Activated T-helper 1 cell treated with anti-CD3 and anti-CD28 coated beads, Interleukin-12 subunit alpha, Interleukin-12 subunit beta, Interleukin-2, Interleukin-4 antibody, amounts not matched to agents 30 ng/mL and 10 ng/mL and 1 ng/mL, durations not matched to agents 14 hours and 24 hours and 36 hours (primary cell): ENCODE measurements at regions of chr9 and their contacts with region 1.

Region 1: GRCh38 chr9:99253772-99254431 is 31.8 kb downstream of the SEC61B start:
- DNase-seq: peak; percentile 82
- H3K4me3 Mint-ChIP-seq: peak overlapping the region; percentile 55
- H3K27ac Mint-ChIP-seq: peak overlapping the region; percentile 92
- H3K4me1 Mint-ChIP-seq: peaks cover 62% of the 10 kb centered on the region
- H3K27me3 Mint-ChIP-seq: no peaks in the 10 kb centered on the region

Region 2: DNA sequence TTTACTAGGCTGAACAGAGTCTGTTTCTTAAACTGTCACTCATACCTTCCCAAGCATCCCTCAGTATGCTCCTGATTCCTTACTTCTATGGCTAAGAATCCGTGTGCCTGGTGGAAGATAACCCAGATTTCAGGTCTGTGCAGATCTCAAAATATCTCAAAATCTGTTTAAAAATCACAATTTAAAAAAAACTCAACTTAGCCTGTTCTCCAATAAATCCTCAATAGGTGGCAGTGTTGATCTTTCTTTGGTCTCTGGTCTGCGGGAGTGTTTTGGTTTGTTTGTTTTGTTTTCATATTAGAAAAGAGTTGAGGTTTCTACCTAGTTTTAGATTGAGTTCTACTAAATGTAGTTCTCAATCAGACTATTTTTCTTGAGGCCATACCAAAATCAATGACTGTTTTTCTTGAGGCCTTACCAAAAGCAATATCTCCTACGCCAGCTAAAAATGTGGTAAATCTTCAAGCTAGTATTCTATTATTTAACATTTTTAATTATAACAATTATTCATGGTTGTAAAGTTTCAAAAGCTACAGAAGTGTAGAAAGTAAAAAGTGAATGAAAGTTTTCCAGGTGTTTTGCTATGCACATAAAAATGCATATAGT is 91.0 kb before region 1 on chr9:
- intact Hi-C with region 1: loop called (anchors 5 kb)
- DNase-seq: no peak
- H3K4me3 Mint-ChIP-seq: no peak overlapping the region
- H3K27ac Mint-ChIP-seq: no peak overlapping the region
- H3K4me1 Mint-ChIP-seq: peaks cover 25% of the 10 kb centered on the region
- H3K27me3 Mint-ChIP-seq: peaks cover 9% of the 10 kb centered on the region

Region 3: DNA sequence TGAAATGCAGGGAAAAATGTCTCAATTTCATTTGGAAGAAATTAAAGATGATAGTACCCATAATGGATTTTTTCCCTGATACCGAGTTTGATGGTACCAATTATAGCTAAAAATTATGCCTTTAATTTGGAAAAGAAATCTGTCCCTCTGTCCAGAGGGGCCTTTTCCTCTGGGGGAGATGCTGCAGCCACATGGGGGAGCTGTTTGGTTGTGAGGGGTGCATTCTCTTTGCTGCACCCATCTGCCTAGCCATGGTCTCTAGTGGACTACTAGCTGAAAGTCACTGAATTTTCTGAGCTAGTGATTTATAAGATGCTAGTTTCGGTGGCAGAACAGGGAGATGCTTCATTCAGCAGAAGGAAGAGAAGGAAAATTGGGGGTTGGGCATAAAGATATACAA is 22.2 kb before region 1 on chr9:
- intact Hi-C with region 1: loop called (anchors 1 kb)
- DNase-seq: no peak
- H3K4me3 Mint-ChIP-seq: no peak overlapping the region
- H3K27ac Mint-ChIP-seq: no peak overlapping the region
- H3K4me1 Mint-ChIP-seq: peaks cover 51% of the 10 kb centered on the region
- H3K27me3 Mint-ChIP-seq: no peaks in the 10 kb centered on the region

Region 4: DNA sequence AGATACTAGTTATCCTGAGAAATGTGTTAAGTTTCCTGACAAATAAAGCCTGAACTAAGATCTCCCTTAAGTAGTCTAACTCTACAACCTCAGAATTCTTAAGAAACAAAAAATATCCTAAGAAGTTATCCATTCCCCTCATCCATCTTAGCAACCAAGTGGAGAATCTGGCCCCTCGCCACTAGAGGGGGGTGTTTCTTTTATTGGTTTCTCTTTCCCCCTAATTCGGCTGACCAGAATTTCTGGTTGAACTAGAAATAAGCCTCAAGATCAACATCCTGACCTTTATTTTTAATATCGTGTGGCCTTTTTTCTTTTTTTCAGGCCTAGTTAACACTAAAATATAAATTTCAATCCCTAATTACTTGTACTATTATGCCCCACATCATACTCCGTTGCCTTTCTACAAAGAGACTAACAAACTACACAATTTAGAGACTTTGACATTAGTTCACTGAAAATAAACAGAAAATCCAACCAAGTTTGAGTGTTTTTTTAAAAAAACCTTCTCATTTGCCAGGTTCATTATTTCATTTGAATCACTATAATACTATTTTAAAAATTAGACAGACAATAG is 553.5 kb after region 1 on chr9:
- intact Hi-C with region 1: loop called (anchors 1 kb)
- DNase-seq: peak; percentile 43
- H3K4me3 Mint-ChIP-seq: no peak overlapping the region
- H3K27ac Mint-ChIP-seq: no peak overlapping the region
- H3K4me1 Mint-ChIP-seq: peaks cover 37% of the 10 kb centered on the region
- H3K27me3 Mint-ChIP-seq: peaks cover 26% of the 10 kb centered on the region

Region 5: DNA sequence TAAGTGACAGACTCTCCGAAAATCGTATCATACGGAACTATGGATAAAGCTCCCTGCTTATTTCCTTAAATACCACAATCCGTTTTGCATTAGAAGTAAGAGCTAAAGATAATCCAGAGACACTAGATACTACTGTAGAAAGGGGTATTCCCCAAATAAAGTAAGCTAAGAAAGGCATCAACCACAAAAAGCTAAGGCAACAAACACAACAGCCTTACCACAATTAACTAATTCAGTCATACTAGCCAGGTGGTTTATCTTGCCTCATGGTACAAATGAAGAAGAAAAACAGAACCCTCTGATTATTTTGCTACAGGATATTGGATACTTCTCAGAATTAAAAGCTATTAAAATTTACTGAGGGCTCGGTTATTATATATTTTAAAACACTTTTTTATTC is 830.8 kb after region 1 on chr9:
- intact Hi-C with region 1: loop called (anchors 5 kb)
- DNase-seq: no peak
- H3K4me3 Mint-ChIP-seq: peak overlapping the region; percentile 23
- H3K27ac Mint-ChIP-seq: no peak overlapping the region
- H3K4me1 Mint-ChIP-seq: peaks cover 64% of the 10 kb centered on the region
- H3K27me3 Mint-ChIP-seq: peaks cover 2% of the 10 kb centered on the region